GM18951 (cell line): ENCODE measurements at regions of chr4 and their contacts with region 1.

Region 1: DNA sequence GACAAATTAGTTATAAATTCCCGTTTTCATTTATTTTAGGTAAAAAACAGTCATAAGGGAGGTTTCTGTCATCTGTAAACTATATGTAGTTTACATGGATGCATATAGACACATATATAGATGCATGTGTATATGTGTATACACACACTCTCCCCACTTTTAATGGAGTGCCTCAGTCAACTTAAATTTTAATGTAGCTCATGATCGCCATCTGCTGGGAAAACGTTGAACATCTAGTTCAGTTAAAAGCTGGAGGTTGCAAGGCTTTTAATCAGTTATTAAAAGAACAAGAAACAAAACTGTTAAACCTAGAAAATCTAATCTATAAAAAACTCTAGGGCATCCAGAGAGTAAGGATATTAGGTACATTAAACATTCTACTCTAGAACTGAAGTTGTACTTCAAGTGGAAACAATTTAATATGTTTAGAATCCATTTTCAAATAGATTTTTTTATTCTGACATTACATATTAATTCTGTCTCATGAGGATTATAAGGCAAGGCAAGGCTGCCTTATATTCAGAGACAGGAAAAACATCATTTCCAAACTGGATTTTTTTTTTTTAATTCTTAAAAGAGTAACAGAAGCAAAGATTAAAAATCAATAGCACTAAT is 122.6 kb downstream of the SHISA3 start:
- POLR2A ChIP-seq: no peak

Region 2: DNA sequence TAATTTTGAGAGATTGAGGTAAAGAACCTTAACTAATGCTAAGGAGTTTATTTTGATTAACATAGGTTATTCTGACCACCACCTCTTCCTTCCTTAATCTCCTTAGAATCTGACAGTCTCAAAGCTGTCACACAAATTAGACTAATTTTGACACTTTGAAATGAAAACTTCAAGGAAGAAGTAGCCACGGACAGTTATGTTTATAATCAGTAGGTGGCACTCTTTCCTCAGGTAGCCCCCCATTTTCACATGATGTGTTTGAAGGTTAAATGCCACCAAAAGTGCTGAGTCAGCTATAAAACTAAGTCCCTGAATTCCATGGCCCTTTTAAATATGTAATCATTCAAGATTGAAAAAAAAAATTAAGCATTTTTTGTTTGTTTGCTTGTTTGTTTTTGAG is 562.3 kb before region 1 on chr4:
- in situ Hi-C with region 1: loop called (anchors 25 kb)
- POLR2A ChIP-seq: no peak

Region 3: GRCh38 chr4:42282081-42282901 is 237.6 kb before region 1 on chr4:
- in situ Hi-C with region 1: loop called (anchors 25 kb)
- POLR2A ChIP-seq: no peak

Region 4: GRCh38 chr4:42339935-42340406 is 179.9 kb before region 1 on chr4:
- in situ Hi-C with region 1: no loop called
- POLR2A ChIP-seq: no peak